CD4-positive, alpha-beta memory T cell (primary cell): ENCODE measurements at regions of chr2 and their contacts with region 1.

Region 1: GRCh38 chr2:234463626-234464290 is 33.1 kb downstream of the ARL4C start:
- DNase-seq: peak; percentile 83 to 90 (median 87)
- H3K4me3 ChIP-seq: peak overlapping the region; percentile 12 to 48
- H3K4me3 Mint-ChIP-seq: peak overlapping the region; percentile 69 to 86 (median 81)
- H3K27ac ChIP-seq: peak overlapping the region; percentile 86
- H3K27ac Mint-ChIP-seq: peak overlapping the region; percentile 88 to 99 (median 97)
- H3K4me1 ChIP-seq: peaks cover 81% of the 10 kb centered on the region
- H3K4me1 Mint-ChIP-seq: peaks cover 49 to 94% (median 73%) of the 10 kb centered on the region in 4 donors
- H3K27me3 ChIP-seq: no peaks in the 10 kb centered on the region
- H3K27me3 Mint-ChIP-seq: no peaks in the 10 kb centered on the region

Region 2: GRCh38 chr2:234478121-234478858 is 14.5 kb after region 1 on chr2:
- CTCF ChIA-PET with region 1: interaction called, 17 read pairs
- POLR2A ChIA-PET with region 1: interaction called, 46 read pairs
- intact Hi-C with region 1: loop called (anchors 1 kb)
- DNase-seq: no peak
- H3K4me3 ChIP-seq: no peak overlapping the region
- H3K4me3 Mint-ChIP-seq: peak overlapping the region in 1 of 8 donors; percentile 24
- H3K27ac ChIP-seq: no peak overlapping the region
- H3K27ac Mint-ChIP-seq: peak overlapping the region in 4 of 7 donors; percentile 17 to 78 (median 74)
- H3K4me1 ChIP-seq: peaks cover 55% of the 10 kb centered on the region
- H3K4me1 Mint-ChIP-seq: peaks cover 36 to 85% (median 67%) of the 10 kb centered on the region in 4 donors
- H3K27me3 ChIP-seq: no peaks in the 10 kb centered on the region
- H3K27me3 Mint-ChIP-seq: no peaks in the 10 kb centered on the region

Region 3: DNA sequence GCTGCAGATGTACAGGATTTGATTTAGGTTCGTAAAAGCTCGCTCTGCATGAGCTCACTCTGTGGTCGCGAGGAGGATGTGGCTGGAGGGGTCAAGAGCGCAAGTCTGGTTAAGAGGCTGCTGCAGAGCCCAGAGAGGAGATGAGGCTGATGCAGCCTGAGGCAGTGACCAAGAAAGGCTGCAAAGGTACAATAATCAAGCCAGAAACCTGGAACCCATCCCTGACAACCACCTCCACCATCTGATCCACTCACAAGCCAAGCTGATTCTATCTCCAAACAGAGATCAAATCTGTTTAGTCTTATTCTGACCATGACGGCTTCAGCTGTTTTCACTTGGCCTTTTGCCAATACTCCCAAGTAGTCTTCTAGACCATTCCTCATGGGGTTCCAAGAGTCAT is 92.0 kb after region 1 on chr2:
- CTCF ChIA-PET with region 1: no interaction called
- POLR2A ChIA-PET with region 1: no interaction called
- intact Hi-C with region 1: no loop called
- DNase-seq: no peak
- H3K4me3 ChIP-seq: no peak overlapping the region
- H3K4me3 Mint-ChIP-seq: no peak overlapping the region
- H3K27ac ChIP-seq: no peak overlapping the region
- H3K27ac Mint-ChIP-seq: no peak overlapping the region
- H3K4me1 ChIP-seq: no peaks in the 10 kb centered on the region
- H3K4me1 Mint-ChIP-seq: peaks cover 0 to 8% (median 1%) of the 10 kb centered on the region in 4 donors
- H3K27me3 ChIP-seq: no peaks in the 10 kb centered on the region
- H3K27me3 Mint-ChIP-seq: peaks cover 10% of the 10 kb centered on the region in 2 donors